Head of caudate nucleus (tissue), 42 donors: ENCODE measurements at regions of chr9 and their contacts with region 1.

Region 1: GRCh38 chr9:94681508-94681907 is 42.2 kb upstream of the FBP1 start:
- DNase-seq: peak; percentile 67 to 94 (median 86)

Region 2: GRCh38 chr9:94993064-94993833 is 311.7 kb after region 1 on chr9:
- intact Hi-C with region 1: loop called (anchors 5 kb)
- DNase-seq: no peak